Heart left ventricle (tissue), 16 donors: ENCODE measurements at regions of chr1 and their contacts with region 1.

Region 1: DNA sequence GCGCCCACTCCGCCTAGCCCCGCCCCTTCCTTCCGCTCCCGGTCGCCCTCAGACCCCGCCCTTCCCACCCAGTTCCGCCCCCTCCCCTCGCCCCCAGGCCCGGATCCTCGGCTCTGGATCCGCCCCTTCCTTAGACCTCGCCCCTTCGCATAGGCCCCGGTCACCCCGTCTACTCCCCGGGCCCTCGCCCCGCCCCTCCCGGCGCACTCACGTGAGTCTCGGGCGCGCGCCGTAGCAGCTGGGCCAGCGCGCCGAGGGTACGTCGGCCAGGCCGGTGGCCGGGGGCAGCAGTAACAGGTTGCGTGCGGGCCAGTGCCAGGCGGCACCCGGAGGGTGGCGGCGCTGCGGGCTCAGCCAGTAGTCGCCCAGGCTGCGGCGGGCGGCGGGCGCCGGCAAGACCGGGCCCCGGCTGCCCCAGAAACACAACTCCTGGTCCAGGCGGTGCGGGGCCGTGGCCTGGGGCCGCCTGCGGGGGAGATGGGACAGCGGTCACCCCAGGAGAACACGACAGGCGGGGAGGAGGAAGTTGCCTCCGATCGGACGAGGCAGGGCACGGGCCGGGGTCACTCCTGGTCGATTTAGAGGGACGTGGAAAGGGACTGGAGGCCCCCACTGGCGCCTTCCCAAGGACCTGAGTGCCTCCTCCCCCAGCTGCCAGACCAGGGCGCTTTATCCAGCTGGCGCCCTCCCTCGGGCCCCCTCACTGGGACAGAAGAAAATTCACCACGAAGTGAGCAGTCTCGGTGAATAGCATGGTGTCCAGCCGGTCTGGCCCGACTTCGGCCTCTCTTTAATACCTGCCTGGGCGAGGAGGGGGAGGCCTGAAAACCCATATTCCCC is 10.7 kb downstream of the FAM229A start:
- DNase-seq: peak; percentile 96 to 97 (median 96)
- ATAC-seq: peak; percentile 87 to 94 (median 92)
- H3K4me3 ChIP-seq: peak overlapping the region; percentile 63 to 96 (median 76)
- H3K27ac ChIP-seq: peak overlapping the region; percentile 80 to 99 (median 94)
- H3K4me1 ChIP-seq: peaks cover 0 to 59% (median 35%) of the 10 kb centered on the region in 12 donors
- H3K27me3 ChIP-seq: no peaks in the 10 kb centered on the region
- CTCF ChIP-seq: peak in 2 of 12 donors; percentile 20 to 33
- POLR2A ChIP-seq: peak; percentile 81 to 94

Region 2: DNA sequence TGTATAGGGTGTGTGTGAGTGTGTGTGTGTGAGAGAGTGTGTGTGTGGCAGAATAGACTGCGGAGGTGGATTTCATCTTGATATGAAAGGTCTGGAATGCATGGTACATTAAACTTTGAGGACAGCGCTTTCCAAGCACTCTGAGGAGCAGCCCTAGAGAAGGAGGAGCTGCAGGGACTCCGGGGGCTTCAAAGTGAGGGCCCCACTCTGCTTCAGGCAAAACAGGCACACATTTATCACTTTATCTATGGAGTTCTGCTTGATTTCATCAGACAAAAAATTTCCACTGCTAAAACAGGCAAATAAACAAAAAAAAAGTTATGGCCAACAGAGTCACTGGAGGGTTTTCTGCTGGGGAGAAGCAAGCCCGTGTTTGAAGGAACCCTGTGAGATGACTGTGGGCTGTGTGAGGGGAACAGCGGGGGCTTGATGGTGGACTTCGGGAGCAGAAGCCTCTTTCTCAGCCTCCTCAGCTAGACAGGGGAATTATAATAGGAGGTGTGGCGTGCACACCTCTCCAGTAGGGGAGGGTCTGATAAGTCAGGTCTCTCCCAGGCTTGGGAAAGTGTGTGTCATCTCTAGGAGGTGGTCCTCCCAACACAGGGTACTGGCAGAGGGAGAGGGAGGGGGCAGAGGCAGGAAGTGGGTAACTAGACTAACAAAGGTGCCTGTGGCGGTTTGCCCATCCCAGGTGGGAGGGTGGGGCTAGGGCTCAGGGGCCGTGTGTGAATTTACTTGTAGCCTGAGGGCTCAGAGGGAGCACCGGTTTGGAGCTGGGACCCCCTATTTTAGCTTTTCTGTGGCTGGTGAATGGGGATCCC is 78.0 kb before region 1 on chr1:
- intact Hi-C with region 1: no loop called
- DNase-seq: no peak
- ATAC-seq: no peak
- H3K4me3 ChIP-seq: no peak overlapping the region
- H3K27ac ChIP-seq: no peak overlapping the region
- H3K4me1 ChIP-seq: peaks cover 0 to 6% (median 0%) of the 10 kb centered on the region in 12 donors
- H3K27me3 ChIP-seq: peaks cover 5 to 39% (median 21%) of the 10 kb centered on the region in 9 donors
- CTCF ChIP-seq: no peak
- POLR2A ChIP-seq: no peak

Region 3: GRCh38 chr1:32335790-32336590 is 15.6 kb before region 1 on chr1 and contains the start of gene MARCKSL1:
- intact Hi-C with region 1: loop called in 1 of 10 experiments (anchors 2 kb)
- DNase-seq: peak; percentile 85 to 92 (median 88)
- ATAC-seq: peak; percentile 9 to 76 (median 71)
- H3K4me3 ChIP-seq: peak within 1 kb of the TSS; percentile 62 to 93 (median 72)
- H3K27ac ChIP-seq: peak within 1 kb of the TSS; percentile 43 to 91 (median 73)
- H3K4me1 ChIP-seq: peaks cover 5 to 55% (median 22%) of the 10 kb centered on the region in 12 donors
- H3K27me3 ChIP-seq: peaks cover 0 to 5% (median 0%) of the 10 kb centered on the region in 9 donors
- CTCF ChIP-seq: peak in 1 of 12 donors; percentile 6
- POLR2A ChIP-seq: peak in 1 of 2 donors; percentile 90
- total RNA-seq, gene MARCKSL1: 6.8 to 44.0 (median 12.1) TPM

Region 4: GRCh38 chr1:32394141-32394889 is 42.7 kb after region 1 on chr1 and contains the start of gene BSDC1:
- intact Hi-C with region 1: loop called in 2 of 10 experiments (anchors 2 to 5 kb)
- DNase-seq: peak; percentile 98 to 99 (median 99)
- ATAC-seq: peak; percentile 98 to 100 (median 98)
- H3K4me3 ChIP-seq: peak within 1 kb of the TSS; percentile 64 to 98 (median 92)
- H3K27ac ChIP-seq: peak within 1 kb of the TSS; percentile 86 to 97 (median 90)
- H3K4me1 ChIP-seq: peaks cover 7 to 50% (median 31%) of the 10 kb centered on the region in 12 donors
- H3K27me3 ChIP-seq: no peaks in the 10 kb centered on the region
- CTCF ChIP-seq: no peak
- POLR2A ChIP-seq: peak; percentile 81 to 90
- total RNA-seq, gene BSDC1: 35.6 to 53.2 (median 44.5) TPM

Region 5: GRCh38 chr1:32619701-32620485 is 268.3 kb after region 1 on chr1:
- intact Hi-C with region 1: no loop called
- DNase-seq: no peak
- ATAC-seq: no peak
- H3K4me3 ChIP-seq: no peak overlapping the region
- H3K27ac ChIP-seq: no peak overlapping the region
- H3K4me1 ChIP-seq: no peaks in the 10 kb centered on the region
- H3K27me3 ChIP-seq: no peaks in the 10 kb centered on the region
- CTCF ChIP-seq: peak in 6 of 12 donors; percentile 13 to 28 (median 20)
- POLR2A ChIP-seq: no peak